Activated naive CD4-positive, alpha-beta T cell treated with anti-CD3 and anti-CD28 coated beads for 36 hours (primary cell): ENCODE measurements at regions of chrX and their contacts with region 1.

Region 1: GRCh38 chrX:130916636-130917422 is 13.8 kb upstream of the ENOX2 start:
- DNase-seq: peak; percentile 43
- H3K4me3 Mint-ChIP-seq: no peak overlapping the region
- H3K27ac Mint-ChIP-seq: no peak overlapping the region
- H3K4me1 Mint-ChIP-seq: no peaks in the 10 kb centered on the region
- H3K27me3 Mint-ChIP-seq: no peaks in the 10 kb centered on the region

Region 2: DNA sequence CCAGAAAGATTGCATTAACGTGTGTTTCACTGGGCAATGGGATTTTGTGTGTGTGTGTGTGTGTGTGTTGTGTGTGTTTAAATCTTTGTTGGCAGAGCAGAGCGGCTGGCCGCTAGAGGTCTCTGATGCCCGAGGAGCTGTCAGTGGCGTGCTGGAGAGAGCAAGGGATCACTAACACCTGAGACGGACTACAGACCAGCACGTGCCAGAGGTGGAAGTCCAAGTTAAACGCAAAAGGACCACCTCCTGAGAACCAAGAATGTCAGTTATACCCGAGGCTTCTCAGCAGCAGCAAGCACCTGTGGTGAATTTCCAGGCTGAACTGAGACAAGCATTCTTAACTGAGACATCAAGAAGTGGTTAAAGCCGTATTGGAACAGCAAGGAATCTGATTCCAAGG is 586.1 kb before region 1 on chrX:
- CTCF ChIA-PET with region 1: interaction called, 4 read pairs
- intact Hi-C with region 1: loop called (anchors 1 kb)
- DNase-seq: peak; percentile 65
- H3K4me3 Mint-ChIP-seq: no peak overlapping the region
- H3K27ac Mint-ChIP-seq: no peak overlapping the region
- H3K4me1 Mint-ChIP-seq: no peaks in the 10 kb centered on the region
- H3K27me3 Mint-ChIP-seq: peaks cover 8% of the 10 kb centered on the region

Region 3: GRCh38 chrX:130393451-130394074 is 523.3 kb before region 1 on chrX:
- CTCF ChIA-PET with region 1: interaction called, 6 read pairs
- intact Hi-C with region 1: loop called (anchors 1 kb)
- DNase-seq: peak; percentile 16
- H3K4me3 Mint-ChIP-seq: no peak overlapping the region
- H3K27ac Mint-ChIP-seq: no peak overlapping the region
- H3K4me1 Mint-ChIP-seq: no peaks in the 10 kb centered on the region
- H3K27me3 Mint-ChIP-seq: no peaks in the 10 kb centered on the region

Region 4: GRCh38 chrX:130539721-130540321 is 377.0 kb before region 1 on chrX:
- CTCF ChIA-PET with region 1: interaction called, 42 read pairs
- intact Hi-C with region 1: loop called (anchors 1 kb)
- DNase-seq: peak; percentile 65
- H3K4me3 Mint-ChIP-seq: no peak overlapping the region
- H3K27ac Mint-ChIP-seq: no peak overlapping the region
- H3K4me1 Mint-ChIP-seq: no peaks in the 10 kb centered on the region
- H3K27me3 Mint-ChIP-seq: peaks cover 6% of the 10 kb centered on the region

Region 5: GRCh38 chrX:130575831-130576389 is 340.9 kb before region 1 on chrX:
- CTCF ChIA-PET with region 1: interaction called, 12 read pairs
- intact Hi-C with region 1: loop called (anchors 1 kb)
- DNase-seq: peak; percentile 49
- H3K4me3 Mint-ChIP-seq: no peak overlapping the region
- H3K27ac Mint-ChIP-seq: no peak overlapping the region
- H3K4me1 Mint-ChIP-seq: no peaks in the 10 kb centered on the region
- H3K27me3 Mint-ChIP-seq: no peaks in the 10 kb centered on the region